ENCODE measurements at regions of chr10 and their contacts with region 1.

Region 1: DNA sequence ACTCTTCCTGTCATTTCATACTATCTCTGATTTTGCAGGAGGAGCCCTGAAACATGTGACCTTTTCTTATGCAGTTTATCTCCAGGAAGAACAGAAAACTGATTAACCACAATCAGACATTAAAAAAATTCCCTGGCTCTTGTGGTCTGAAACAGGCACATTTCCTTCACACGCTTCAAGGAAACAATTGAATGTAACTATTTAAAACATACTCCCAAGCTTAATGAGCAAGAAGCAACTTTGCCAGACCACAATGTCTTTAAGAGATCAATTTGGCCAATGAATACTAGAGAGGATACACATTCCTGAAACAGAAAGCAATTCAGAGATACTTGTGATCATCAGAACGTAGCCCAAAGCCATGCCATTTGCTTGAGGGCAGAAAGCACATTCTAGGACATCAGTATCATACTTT is 65.8 kb downstream of the PIP4K2A start:
- DNase-seq: no peak
- ATAC-seq: no peak
- H3K4me3 ChIP-seq: peak overlapping the region; percentile 37
- H3K4me3 Mint-ChIP-seq: peak overlapping the region in 9 of 10 donors; percentile 60 to 89 (median 82)
- H3K27ac ChIP-seq: peak overlapping the region; percentile 53
- H3K27ac Mint-ChIP-seq: peak overlapping the region; percentile 75 to 97 (median 93)
- H3K4me1 ChIP-seq: peaks cover 97 to 98% of the 10 kb centered on the region in 2 donors
- H3K4me1 Mint-ChIP-seq: peaks cover 79 to 96% (median 90%) of the 10 kb centered on the region in 7 donors
- H3K27me3 ChIP-seq: no peaks in the 10 kb centered on the region
- H3K27me3 Mint-ChIP-seq: no peaks in the 10 kb centered on the region

Region 2: DNA sequence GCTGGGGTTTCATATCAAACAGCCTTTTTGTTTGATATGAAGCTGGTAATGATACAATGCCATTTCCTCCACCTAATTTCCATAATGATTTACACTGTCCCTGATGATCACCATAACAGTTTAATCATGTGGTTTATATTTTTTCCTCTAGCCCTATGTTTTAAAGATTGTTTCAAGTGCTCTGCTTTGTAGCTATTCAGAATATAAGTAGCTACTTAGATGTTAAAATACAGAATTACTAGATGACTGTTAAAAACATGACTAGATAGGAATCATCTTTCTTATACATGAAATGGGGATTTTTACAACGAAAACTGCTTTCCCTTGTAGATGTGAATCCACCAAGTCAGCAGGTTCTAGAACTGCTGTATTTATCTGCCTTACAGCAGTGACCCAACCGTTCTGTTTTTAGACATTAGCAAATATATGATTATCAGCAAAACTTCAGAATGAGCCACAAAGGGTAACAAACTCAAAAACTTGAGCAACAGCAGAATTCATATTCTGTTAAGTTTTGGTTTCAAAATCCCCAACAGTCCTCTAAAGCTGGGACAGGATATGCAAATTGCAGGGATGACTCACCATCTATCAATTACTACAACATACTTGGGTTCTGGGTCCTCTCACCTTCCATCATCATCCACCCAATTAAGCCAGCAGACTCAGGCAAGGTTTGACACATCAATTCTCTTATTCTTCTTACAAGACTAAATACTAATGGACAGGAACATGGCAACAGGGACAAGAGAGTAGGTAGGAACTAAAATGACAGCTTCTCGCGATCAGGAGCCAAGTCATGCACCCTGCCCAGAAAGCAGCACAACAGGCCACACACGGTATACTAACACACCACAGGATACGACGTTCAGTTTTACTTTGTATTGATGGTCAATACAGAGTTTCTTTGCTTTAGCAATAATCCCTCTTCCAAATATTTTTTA is 18.1 kb before region 1 on chr10:
- CTCF ChIA-PET with region 1: interaction called, 3 read pairs
- POLR2A ChIA-PET with region 1: interaction called, 6 read pairs
- intact Hi-C with region 1: loop called (anchors 1 kb)
- DNase-seq: peak in 6 of 9 donors; percentile 27 to 73 (median 38)
- ATAC-seq: peak; percentile 89
- H3K4me3 ChIP-seq: peak overlapping the region; percentile 37
- H3K4me3 Mint-ChIP-seq: peak overlapping the region; percentile 3 to 85 (median 72)
- H3K27ac ChIP-seq: peak overlapping the region; percentile 68
- H3K27ac Mint-ChIP-seq: peak overlapping the region; percentile 68 to 98 (median 90)
- H3K4me1 ChIP-seq: peaks cover 66 to 97% of the 10 kb centered on the region in 2 donors
- H3K4me1 Mint-ChIP-seq: peaks cover 65 to 100% (median 98%) of the 10 kb centered on the region in 7 donors
- H3K27me3 ChIP-seq: no peaks in the 10 kb centered on the region
- H3K27me3 Mint-ChIP-seq: no peaks in the 10 kb centered on the region